Heart right ventricle (tissue), 16 donors: ENCODE measurements at regions of chr4 and their contacts with region 1.

Region 1: GRCh38 chr4:163544407-163545038 is 50.0 kb downstream of the TMA16 start:
- DNase-seq: peak; percentile 28 to 48
- ATAC-seq: peak in 7 of 8 donors; percentile 76 to 85 (median 79)
- H3K4me3 ChIP-seq: peak overlapping the region in 6 of 10 donors; percentile 26 to 39 (median 35)
- H3K27ac ChIP-seq: no peak overlapping the region
- H3K4me1 ChIP-seq: peaks cover 0 to 11% (median 0%) of the 10 kb centered on the region in 9 donors
- H3K27me3 ChIP-seq: no peaks in the 10 kb centered on the region
- CTCF ChIP-seq: peak; percentile 79 to 97 (median 92)

Region 2: GRCh38 chr4:162497564-162498167 is 1046.9 kb before region 1 on chr4:
- intact Hi-C with region 1: loop called in 6 of 10 experiments (anchors 5 to 10 kb)
- DNase-seq: no peak
- ATAC-seq: peak; percentile 52 to 88 (median 76)
- H3K4me3 ChIP-seq: peak overlapping the region in 5 of 10 donors; percentile 12 to 32 (median 26)
- H3K27ac ChIP-seq: peak overlapping the region in 1 of 10 donors; percentile 12
- H3K4me1 ChIP-seq: peaks cover 0 to 5% (median 0%) of the 10 kb centered on the region in 9 donors
- H3K27me3 ChIP-seq: no peaks in the 10 kb centered on the region
- CTCF ChIP-seq: peak; percentile 68 to 92 (median 81)

Region 3: DNA sequence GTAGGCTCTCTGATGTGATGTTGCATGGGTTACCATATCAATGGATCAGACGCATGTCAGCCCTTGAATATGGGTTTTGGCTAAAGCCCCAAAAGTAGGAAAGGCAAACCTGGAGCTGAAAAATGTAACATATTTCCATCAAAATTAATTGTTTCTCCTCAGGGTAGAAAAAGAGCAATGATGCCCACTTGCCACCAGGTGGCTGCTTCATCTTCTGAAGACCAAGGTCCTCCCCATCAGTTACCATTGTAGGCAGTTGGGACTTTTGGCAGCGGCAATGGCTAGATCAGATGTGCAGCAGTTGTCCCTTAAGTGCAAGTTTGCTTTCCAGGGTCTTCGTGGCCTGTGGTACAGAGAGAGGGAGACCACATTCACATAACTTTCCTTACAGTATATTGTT is 496.1 kb before region 1 on chr4:
- intact Hi-C with region 1: loop called in 1 of 10 experiments (anchors 10 kb)
- DNase-seq: no peak
- ATAC-seq: no peak
- H3K4me3 ChIP-seq: no peak overlapping the region
- H3K27ac ChIP-seq: no peak overlapping the region
- H3K4me1 ChIP-seq: no peaks in the 10 kb centered on the region
- H3K27me3 ChIP-seq: no peaks in the 10 kb centered on the region
- CTCF ChIP-seq: peak in 7 of 9 donors; percentile 19 to 38 (median 31)

Region 4: GRCh38 chr4:163484906-163485305 is 59.6 kb before region 1 on chr4:
- intact Hi-C with region 1: loop called in 8 of 10 experiments (anchors 1 to 5 kb)
- DNase-seq: peak in 1 of 2 donors; percentile 29
- ATAC-seq: peak in 1 of 8 donors; percentile 41
- H3K4me3 ChIP-seq: no peak overlapping the region
- H3K27ac ChIP-seq: no peak overlapping the region
- H3K4me1 ChIP-seq: peaks cover 0 to 13% (median 0%) of the 10 kb centered on the region in 9 donors
- H3K27me3 ChIP-seq: peaks cover 0 to 6% (median 0%) of the 10 kb centered on the region in 7 donors
- CTCF ChIP-seq: peak in 8 of 9 donors; percentile 31 to 68 (median 56)